Activated CD4-positive, alpha-beta T cell treated with anti-CD3 and anti-CD28 coated beads for 36 hours (primary cell): ENCODE measurements at regions of chr2 and their contacts with region 1.

Region 1: DNA sequence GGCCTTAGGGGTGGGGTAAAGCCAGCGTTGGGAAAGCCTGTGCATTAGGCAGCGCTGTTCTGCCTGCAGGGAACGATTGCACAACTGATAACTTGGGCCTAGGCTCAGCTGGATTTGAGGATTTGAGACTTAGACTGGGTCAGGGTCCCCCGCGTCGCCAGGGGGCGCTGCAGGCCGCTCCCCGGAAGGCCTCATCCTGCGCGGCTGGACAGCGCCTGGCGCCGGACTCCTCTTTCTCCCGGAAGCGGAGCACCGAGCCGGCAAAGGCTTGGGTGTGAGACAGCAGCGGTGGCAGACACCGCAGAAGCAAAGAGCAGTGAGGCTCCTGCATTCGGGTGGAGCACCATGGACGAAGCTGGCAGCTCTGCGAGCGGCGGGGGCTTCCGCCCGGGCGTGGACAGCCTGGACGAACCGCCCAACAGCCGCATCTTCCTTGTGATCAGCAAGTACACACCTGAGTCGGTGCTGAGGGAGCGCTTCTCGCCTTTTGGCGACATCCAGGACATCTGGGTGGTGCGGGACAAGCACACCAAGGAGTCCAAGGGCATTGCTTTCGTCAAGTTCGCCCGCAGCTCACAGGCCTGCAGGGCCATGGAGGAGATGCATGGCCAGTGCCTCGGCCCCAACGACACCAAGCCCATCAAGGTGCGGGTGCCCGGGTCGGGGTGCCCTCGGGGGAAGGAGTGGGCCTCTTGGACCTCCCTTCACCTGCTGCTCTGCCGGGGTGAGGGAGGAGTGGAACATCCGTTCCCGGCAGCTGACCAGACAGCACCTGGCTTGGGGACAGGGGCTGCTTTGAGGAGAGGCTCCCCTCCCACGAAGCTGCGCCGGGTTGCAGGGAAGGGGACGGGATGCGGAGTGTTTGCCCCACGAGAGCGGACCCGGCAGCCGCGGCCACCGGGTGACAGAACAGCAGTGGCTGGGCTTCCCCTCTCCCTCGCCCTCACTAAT is at the start of gene RBM45:
- DNase-seq: peak; percentile 93
- ATAC-seq: peak; percentile 93
- H3K4me3 Mint-ChIP-seq: peak within 1 kb of the TSS; percentile 92
- H3K27ac Mint-ChIP-seq: peak within 1 kb of the TSS; percentile 87
- H3K4me1 Mint-ChIP-seq: peaks cover 33% of the 10 kb centered on the region
- H3K27me3 Mint-ChIP-seq: no peaks in the 10 kb centered on the region
- total RNA-seq, gene RBM45: 10.0 to 12.9 TPM

Region 2: GRCh38 chr2:177552422-177553175 is 559.9 kb before region 1 on chr2:
- CTCF ChIA-PET with region 1: no interaction called
- POLR2A ChIA-PET with region 1: no interaction called
- intact Hi-C with region 1: loop called in 1 of 2 experiments (anchors 5 kb)
- DNase-seq: peak; percentile 92
- ATAC-seq: peak; percentile 96
- H3K4me3 Mint-ChIP-seq: peak overlapping the region; percentile 90
- H3K27ac Mint-ChIP-seq: peak overlapping the region; percentile 99
- H3K4me1 Mint-ChIP-seq: peaks cover 6% of the 10 kb centered on the region
- H3K27me3 Mint-ChIP-seq: no peaks in the 10 kb centered on the region

Region 3: GRCh38 chr2:177618255-177619253 is 493.9 kb before region 1 on chr2:
- CTCF ChIA-PET with region 1: no interaction called
- POLR2A ChIA-PET with region 1: no interaction called
- intact Hi-C with region 1: loop called in 1 of 2 experiments (anchors 5 kb)
- DNase-seq: peak; percentile 95
- ATAC-seq: peak; percentile 95
- H3K4me3 Mint-ChIP-seq: peak overlapping the region; percentile 90
- H3K27ac Mint-ChIP-seq: peak overlapping the region; percentile 98
- H3K4me1 Mint-ChIP-seq: no peaks in the 10 kb centered on the region
- H3K27me3 Mint-ChIP-seq: no peaks in the 10 kb centered on the region

Region 4: DNA sequence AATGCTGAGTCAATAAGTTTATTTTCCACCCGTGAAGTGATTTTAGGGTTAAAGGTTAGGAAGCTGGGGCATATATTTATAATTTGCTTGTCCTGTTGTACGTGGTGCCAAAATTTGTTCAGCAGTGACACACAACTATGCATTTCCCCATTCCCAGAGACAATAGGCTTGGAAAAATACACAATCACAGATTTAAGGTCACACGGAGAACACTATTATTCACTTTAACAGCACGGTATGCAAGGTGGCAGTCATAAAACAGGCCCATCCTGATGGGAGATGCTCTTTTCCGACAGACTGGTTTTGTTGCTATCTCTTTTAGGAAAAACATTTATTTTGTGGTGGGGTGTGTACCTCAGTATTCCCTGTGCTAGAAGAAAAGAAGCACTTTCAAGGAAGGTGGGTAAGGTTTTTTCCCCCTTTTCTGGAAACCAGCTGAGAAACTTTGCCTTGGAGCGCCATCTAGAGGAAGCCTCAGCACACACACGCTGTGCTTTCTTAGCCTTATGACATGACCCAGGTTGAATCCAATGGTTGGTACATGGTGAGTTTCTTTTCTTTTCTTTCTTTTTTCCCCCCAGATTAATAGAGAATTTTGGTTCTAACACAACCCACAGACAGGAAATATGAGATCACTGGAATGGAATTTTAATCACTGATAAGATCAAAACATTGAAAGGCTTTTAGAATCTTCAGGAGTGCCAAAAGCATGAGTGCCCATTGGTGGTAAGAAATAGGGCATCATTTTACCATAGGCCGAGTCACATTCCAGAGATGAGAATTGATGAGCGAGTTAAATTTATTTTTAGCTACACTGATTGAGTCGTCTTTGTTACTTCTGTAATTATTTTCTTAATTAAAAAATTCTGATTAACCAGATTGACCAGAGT is 387.8 kb before region 1 on chr2:
- CTCF ChIA-PET with region 1: no interaction called
- POLR2A ChIA-PET with region 1: no interaction called
- intact Hi-C with region 1: no loop called
- DNase-seq: peak; percentile 72
- ATAC-seq: peak; percentile 64
- H3K4me3 Mint-ChIP-seq: no peak overlapping the region
- H3K27ac Mint-ChIP-seq: no peak overlapping the region
- H3K4me1 Mint-ChIP-seq: peaks cover 2% of the 10 kb centered on the region
- H3K27me3 Mint-ChIP-seq: peaks cover 16% of the 10 kb centered on the region

Region 5: GRCh38 chr2:177908182-177908581 is 204.3 kb before region 1 on chr2:
- CTCF ChIA-PET with region 1: no interaction called
- POLR2A ChIA-PET with region 1: no interaction called
- intact Hi-C with region 1: no loop called
- DNase-seq: no peak
- ATAC-seq: no peak
- H3K4me3 Mint-ChIP-seq: no peak overlapping the region
- H3K27ac Mint-ChIP-seq: no peak overlapping the region
- H3K4me1 Mint-ChIP-seq: peaks cover 3% of the 10 kb centered on the region
- H3K27me3 Mint-ChIP-seq: peaks cover 2% of the 10 kb centered on the region

Region 6: DNA sequence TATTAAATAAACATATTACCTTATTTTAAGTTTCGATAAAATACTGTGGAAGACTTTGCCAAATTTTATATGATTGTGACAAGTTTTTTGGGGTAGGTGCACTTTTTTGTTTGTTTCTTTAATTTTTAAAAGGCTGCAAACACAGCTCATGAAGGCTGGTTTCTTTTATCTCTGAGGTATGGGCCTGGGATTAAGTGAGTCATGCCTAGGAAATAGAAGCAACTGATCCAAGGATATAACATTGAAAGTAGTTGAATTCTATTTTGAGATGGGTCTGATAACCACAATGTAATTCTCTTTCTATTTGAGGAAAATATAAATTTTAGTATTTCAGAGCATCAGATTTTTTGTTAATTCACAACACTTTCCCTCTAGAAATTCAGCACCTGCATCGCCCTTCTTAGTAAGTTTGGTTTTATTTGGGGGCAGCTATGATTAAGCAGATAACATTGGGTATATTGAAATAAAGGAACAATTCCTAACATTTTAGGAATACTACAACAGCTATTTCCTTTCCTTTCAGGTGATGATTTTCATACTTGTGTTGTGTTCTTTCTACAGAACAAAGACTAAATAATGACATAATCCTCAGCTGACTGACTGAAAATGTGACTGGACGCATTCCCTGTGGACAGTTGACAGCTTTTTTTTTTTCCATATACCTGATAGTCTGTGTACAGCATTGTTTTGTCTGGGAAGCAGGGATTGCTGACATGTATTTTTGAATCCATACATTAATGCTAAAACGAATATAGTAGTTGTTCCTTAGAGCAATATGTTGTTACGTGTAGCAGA is 16.6 kb after region 1 on chr2:
- CTCF ChIA-PET with region 1: interaction called, 27 read pairs
- POLR2A ChIA-PET with region 1: no interaction called
- intact Hi-C with region 1: no loop called
- DNase-seq: no peak
- ATAC-seq: no peak
- H3K4me3 Mint-ChIP-seq: no peak overlapping the region
- H3K27ac Mint-ChIP-seq: no peak overlapping the region
- H3K4me1 Mint-ChIP-seq: no peaks in the 10 kb centered on the region
- H3K27me3 Mint-ChIP-seq: no peaks in the 10 kb centered on the region

Region 7: DNA sequence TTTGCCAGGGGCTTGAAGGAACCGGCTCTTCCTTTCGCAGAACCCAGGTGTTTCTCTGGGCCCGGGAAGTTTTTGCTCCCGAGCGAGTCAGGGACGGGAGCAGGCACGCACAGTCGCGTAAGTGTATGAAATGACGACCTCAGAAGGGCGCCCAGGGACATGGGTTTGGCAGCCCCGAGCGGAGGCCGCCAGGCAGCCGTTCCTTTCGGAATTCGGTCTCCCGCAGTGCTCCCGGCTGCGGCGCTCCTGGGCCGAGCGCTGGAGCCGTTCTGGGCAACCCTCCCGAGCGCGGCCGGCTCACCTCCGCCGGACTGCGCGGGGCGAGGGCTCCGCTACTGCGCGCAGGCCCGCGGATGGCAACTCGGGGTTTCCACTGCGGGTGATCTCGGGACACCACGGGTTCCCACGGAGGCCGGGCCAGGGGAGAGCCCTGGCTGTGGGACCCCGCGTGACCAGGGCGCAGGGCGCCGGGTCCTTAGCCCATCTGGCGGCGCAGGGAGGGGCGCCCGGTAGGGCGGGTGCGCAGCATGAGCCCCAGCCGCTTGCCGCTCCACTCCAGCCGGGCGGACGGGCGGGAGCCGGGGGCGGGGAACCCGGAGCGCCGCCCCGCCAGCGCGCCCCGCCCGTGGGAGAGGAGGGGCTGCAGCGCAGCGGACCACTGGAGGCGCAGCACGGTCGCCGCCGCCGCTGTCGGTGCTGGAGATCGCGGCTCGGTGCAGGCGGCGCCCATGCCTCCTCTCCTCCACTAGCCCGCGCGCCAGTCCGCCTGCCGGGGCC is 81.5 kb after region 1 on chr2 and contains the start of gene OSBPL6:
- CTCF ChIA-PET with region 1: interaction called, 4 read pairs
- POLR2A ChIA-PET with region 1: no interaction called
- intact Hi-C with region 1: loop called (anchors 1 kb)
- DNase-seq: peak; percentile 82
- ATAC-seq: peak; percentile 91
- H3K4me3 Mint-ChIP-seq: peak within 1 kb of the TSS; percentile 67
- H3K27ac Mint-ChIP-seq: no peak within 1 kb of the TSS
- H3K4me1 Mint-ChIP-seq: peaks cover 7% of the 10 kb centered on the region
- H3K27me3 Mint-ChIP-seq: peaks cover 45% of the 10 kb centered on the region
- total RNA-seq, gene OSBPL6: 2.5 to 3.3 TPM

Region 8: GRCh38 chr2:178280244-178280852 is 167.9 kb after region 1 on chr2:
- CTCF ChIA-PET with region 1: interaction called, 12 read pairs
- POLR2A ChIA-PET with region 1: no interaction called
- intact Hi-C with region 1: loop called (anchors 1 kb)
- DNase-seq: peak; percentile 45
- ATAC-seq: peak; percentile 61
- H3K4me3 Mint-ChIP-seq: no peak overlapping the region
- H3K27ac Mint-ChIP-seq: no peak overlapping the region
- H3K4me1 Mint-ChIP-seq: no peaks in the 10 kb centered on the region
- H3K27me3 Mint-ChIP-seq: peaks cover 6% of the 10 kb centered on the region

Region 9: DNA sequence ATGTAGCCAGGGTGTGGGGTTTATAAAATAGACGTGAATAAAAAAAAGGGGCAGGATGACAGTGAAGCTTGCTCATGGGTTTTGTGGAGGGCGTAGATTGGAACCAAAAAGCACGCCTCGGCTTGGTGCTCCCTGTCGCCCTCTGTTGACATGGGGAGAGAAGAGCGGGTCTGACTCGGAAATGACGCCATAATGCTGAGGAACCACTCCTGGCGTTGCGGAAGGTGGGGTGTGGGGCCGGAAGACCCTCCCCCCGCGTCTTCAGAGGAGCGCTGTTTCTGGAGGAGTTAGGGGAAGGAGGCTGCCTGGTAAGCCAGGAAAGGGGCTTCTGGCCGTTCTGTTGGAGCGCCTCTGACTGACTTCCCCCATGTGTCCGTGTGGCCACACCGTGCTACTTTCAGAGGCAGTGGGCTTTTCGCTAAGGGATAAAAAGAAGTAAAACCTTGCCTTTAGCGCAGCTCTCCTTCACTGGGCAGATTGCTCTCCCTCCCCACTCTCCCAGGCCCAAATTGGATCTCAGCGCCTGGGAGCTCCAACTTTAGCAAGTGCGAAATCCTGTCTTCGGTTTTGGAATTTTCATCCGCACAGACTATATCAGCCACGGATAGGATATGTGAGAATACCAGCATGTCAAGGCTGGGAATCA is 410.6 kb after region 1 on chr2:
- CTCF ChIA-PET with region 1: no interaction called
- POLR2A ChIA-PET with region 1: no interaction called
- intact Hi-C with region 1: loop called (anchors 5 kb)
- DNase-seq: peak; percentile 90
- ATAC-seq: peak; percentile 80
- H3K4me3 Mint-ChIP-seq: peak overlapping the region; percentile 85
- H3K27ac Mint-ChIP-seq: peak overlapping the region; percentile 92
- H3K4me1 Mint-ChIP-seq: peaks cover 55% of the 10 kb centered on the region
- H3K27me3 Mint-ChIP-seq: no peaks in the 10 kb centered on the region